RWPE1 (cell line): ENCODE measurements at regions of chr16 and their contacts with region 1.

Region 1: GRCh38 chr16:29926005-29926710 is at the start of gene KCTD13:
- DNase-seq: peak; percentile 98
- H3K27ac ChIP-seq: peak within 1 kb of the TSS; percentile 81
- CTCF ChIP-seq: no peak

Region 2: GRCh38 chr16:29975811-29976511 is 49.8 kb after region 1 on chr16:
- CTCF ChIA-PET with region 1: interaction called, 4 read pairs
- POLR2A ChIA-PET with region 1: interaction called, 10 read pairs
- DNase-seq: no peak
- H3K27ac ChIP-seq: peak overlapping the region; percentile 53
- CTCF ChIP-seq: no peak

Region 3: DNA sequence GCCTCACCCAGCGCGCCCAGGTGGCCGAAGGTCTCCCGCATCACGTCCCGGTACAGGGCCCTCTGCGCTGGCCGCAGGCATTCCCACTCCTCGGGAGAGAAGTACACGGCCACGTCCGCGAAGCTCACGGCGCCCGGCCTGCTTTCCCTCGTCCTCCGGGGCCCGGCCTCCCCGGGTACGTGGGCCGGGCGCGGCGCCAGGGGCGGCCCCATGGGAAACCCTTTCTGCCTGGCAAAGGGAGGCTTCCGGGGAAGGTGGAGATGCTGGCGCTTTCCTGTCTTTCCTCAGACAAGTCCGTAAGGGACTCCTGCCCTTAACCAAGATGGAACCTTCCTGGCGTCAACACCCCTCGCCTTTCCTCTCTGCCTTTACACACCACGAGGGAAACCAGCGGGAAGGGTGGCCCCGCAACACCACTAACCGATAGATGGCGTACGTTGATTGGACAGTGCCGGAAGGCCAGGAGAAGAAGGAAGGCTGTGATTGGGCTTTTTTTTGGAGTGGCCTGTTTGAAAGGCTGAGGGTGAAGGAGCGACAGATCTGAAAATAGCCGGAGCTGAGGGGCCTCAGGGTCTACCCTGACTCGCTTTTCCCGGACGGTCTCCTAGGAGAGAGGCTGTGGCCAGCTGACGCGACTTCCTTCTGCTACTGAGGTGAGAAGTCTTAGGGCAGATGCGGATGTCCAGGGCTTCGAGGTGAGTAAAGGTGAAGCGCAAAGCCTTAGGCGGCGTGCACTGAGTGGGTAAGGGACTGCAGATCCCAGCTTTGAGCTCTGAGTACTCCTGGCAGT is 659.4 kb after region 1 on chr16 and contains the start of gene ZNF785:
- CTCF ChIA-PET with region 1: no interaction called
- POLR2A ChIA-PET with region 1: no interaction called
- DNase-seq: peak; percentile 99
- H3K27ac ChIP-seq: peak within 1 kb of the TSS; percentile 92
- CTCF ChIP-seq: no peak